ENCODE measurements at regions of chr3 and their contacts with region 1.

Region 1: DNA sequence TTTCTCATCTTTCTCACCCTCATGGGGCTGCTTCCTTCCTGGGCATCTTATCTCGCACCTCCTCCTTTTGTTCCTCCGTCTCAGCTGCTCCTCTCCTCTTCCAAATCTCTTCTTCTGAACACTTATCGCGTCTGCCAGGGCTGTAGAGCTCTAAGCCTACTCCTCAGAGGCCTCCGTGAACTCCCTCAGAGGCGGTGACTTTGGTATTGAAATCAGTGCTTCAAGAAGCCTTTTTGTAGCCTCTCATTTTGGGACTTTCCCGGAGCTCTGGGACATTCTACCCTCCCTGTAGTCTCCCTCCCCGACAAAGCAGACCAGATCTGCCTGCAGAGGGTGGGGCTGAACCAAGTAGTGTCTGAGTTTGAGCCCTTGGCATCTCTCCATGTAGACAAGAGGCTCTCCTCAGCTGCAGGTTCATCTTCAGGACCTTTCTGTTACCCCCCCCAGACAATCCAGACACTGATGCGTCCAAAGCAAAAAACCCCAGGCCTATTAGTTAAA is 17.5 kb upstream of the CPNE9 start:
- DNase-seq: no peak
- ATAC-seq: no peak
- H3K4me3 ChIP-seq: no peak overlapping the region
- H3K27ac ChIP-seq: no peak overlapping the region
- H3K4me1 ChIP-seq: peaks cover 5% of the 10 kb centered on the region
- H3K27me3 ChIP-seq: no peaks in the 10 kb centered on the region

Region 2: GRCh38 chr3:9439331-9439730 is 246.8 kb before region 1 on chr3:
- intact Hi-C with region 1: loop called in 1 of 4 experiments (anchors 5 kb)
- DNase-seq: no peak
- ATAC-seq: no peak
- H3K4me3 ChIP-seq: no peak overlapping the region
- H3K27ac ChIP-seq: no peak overlapping the region
- H3K4me1 ChIP-seq: no peaks in the 10 kb centered on the region
- H3K27me3 ChIP-seq: no peaks in the 10 kb centered on the region

Region 3: DNA sequence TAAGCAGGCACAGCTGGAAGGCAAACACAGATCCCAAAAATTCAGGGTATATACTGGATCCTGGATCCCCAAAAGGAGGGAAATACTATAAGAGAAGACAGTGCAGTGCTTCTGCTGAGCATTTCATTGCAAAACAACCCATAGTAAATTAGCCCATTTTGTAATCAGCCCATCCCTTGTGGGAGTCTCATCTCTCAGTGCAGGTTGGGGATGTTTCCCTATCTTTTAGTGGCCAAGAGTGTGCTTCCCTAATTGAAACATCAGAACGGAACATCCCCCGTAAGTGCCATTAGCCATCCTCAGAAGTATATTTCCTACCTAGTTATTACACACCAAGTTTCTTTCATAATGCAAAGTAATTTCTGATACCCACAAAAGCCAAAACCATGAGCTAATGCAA is 47.9 kb before region 1 on chr3:
- intact Hi-C with region 1: no loop called
- DNase-seq: no peak
- ATAC-seq: no peak
- H3K4me3 ChIP-seq: no peak overlapping the region
- H3K27ac ChIP-seq: no peak overlapping the region
- H3K4me1 ChIP-seq: no peaks in the 10 kb centered on the region
- H3K27me3 ChIP-seq: no peaks in the 10 kb centered on the region